Thyroid gland (tissue), 4 donors: ENCODE measurements at regions of chr15 and their contacts with region 1.

Region 1: GRCh38 chr15:101637549-101638318 is 14.4 kb downstream of the TM2D3 start:
- DNase-seq: no peak
- H3K4me3 ChIP-seq: no peak overlapping the region
- H3K27ac ChIP-seq: no peak overlapping the region
- H3K4me1 ChIP-seq: peaks cover 5 to 12% of the 10 kb centered on the region in 2 donors
- H3K27me3 ChIP-seq: no peaks in the 10 kb centered on the region
- CTCF ChIP-seq: no peak
- POLR2A ChIP-seq: no peak

Region 2: GRCh38 chr15:101303408-101303807 is 334.3 kb before region 1 on chr15:
- intact Hi-C with region 1: loop called (anchors 5 kb)
- DNase-seq: no peak
- H3K4me3 ChIP-seq: no peak overlapping the region
- H3K27ac ChIP-seq: no peak overlapping the region
- H3K4me1 ChIP-seq: no peaks in the 10 kb centered on the region
- H3K27me3 ChIP-seq: no peaks in the 10 kb centered on the region
- CTCF ChIP-seq: no peak
- POLR2A ChIP-seq: no peak

Region 3: DNA sequence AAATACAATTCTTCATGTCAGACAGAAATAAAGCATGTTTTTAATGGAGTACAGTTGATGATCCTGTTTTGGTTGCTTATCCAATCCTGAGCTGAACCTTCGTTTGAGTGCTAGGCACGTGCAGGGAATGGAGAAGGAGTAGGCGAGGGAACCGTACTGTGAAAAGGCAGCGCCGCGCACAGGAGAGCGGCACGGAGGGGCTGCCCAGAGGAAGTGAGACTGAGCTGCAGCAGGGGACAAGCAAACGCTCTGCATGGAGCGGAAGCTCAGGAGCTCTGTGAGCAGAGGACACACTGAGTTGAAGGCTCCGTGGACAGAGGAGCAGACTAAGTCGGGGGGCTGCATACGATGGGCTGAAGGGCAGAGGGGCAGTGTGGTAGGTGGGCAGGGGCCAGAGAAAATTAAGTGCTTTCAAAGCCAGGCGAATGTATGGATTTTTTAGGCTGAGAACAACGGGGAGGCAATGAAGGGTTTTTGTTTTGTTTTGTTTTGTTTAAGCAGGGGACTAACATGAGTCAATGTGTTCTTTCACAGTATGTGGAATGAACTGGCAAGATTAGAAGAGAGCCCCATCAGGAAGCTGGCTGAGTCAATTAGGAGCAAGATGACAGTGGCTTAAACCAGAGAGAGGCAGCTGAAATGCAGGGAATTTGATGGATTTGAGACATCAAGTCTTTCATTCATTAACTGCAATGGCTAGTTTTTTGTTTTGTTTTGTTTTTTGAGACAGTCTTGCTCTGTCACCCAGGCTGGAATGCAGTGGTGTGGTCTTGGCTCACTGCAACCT is 38.3 kb after region 1 on chr15:
- intact Hi-C with region 1: no loop called
- DNase-seq: no peak
- H3K4me3 ChIP-seq: no peak overlapping the region
- H3K27ac ChIP-seq: no peak overlapping the region
- H3K4me1 ChIP-seq: no peaks in the 10 kb centered on the region
- H3K27me3 ChIP-seq: no peaks in the 10 kb centered on the region
- CTCF ChIP-seq: no peak
- POLR2A ChIP-seq: no peak